Tibial artery (tissue), 4 donors: ENCODE measurements at regions of chr1 and their contacts with region 1.

Region 1: GRCh38 chr1:154546264-154547063 is 12.0 kb downstream of the UBE2Q1 start:
- DNase-seq: peak in 1 of 2 donors; percentile 34
- H3K4me3 ChIP-seq: no peak overlapping the region
- H3K27ac ChIP-seq: no peak overlapping the region
- H3K4me1 ChIP-seq: no peaks in the 10 kb centered on the region
- H3K27me3 ChIP-seq: peaks cover 0 to 21% of the 10 kb centered on the region in 2 donors
- CTCF ChIP-seq: peak; percentile 61 to 67

Region 2: GRCh38 chr1:154479764-154480421 is 66.6 kb before region 1 on chr1:
- intact Hi-C with region 1: loop called (anchors 5 kb)
- DNase-seq: peak in 1 of 2 donors; percentile 75
- H3K4me3 ChIP-seq: no peak overlapping the region
- H3K27ac ChIP-seq: no peak overlapping the region
- H3K4me1 ChIP-seq: peaks cover 0 to 6% (median 0%) of the 10 kb centered on the region in 4 donors
- H3K27me3 ChIP-seq: no peaks in the 10 kb centered on the region
- CTCF ChIP-seq: peak; percentile 93 to 96

Region 3: GRCh38 chr1:154558575-154559465 is 12.4 kb after region 1 on chr1 and contains the start of gene UBE2Q1:
- intact Hi-C with region 1: no loop called
- DNase-seq: peak; percentile 99 to 100
- H3K4me3 ChIP-seq: peak within 1 kb of the TSS; percentile 90 to 94
- H3K27ac ChIP-seq: peak within 1 kb of the TSS; percentile 86 to 91
- H3K4me1 ChIP-seq: peaks cover 0 to 28% (median 18%) of the 10 kb centered on the region in 4 donors
- H3K27me3 ChIP-seq: no peaks in the 10 kb centered on the region
- CTCF ChIP-seq: no peak